WTC11 (cell line): ENCODE measurements at regions of chr7 and their contacts with region 1.

Region 1: GRCh38 chr7:65475734-65476319 is 102.2 kb downstream of the ZNF92 start:
- DNase-seq: no peak
- ATAC-seq: peak; percentile 36
- H3K4me3 Mint-ChIP-seq: no peak overlapping the region
- H3K27ac Mint-ChIP-seq: no peak overlapping the region
- H3K4me1 Mint-ChIP-seq: peaks cover 21% of the 10 kb centered on the region
- H3K27me3 Mint-ChIP-seq: peaks cover 12% of the 10 kb centered on the region
- CTCF ChIP-seq: no peak

Region 2: GRCh38 chr7:64951250-64951848 is 524.5 kb before region 1 on chr7:
- CTCF ChIA-PET with region 1: interaction called, 18 read pairs
- POLR2A ChIA-PET with region 1: no interaction called
- DNase-seq: no peak
- ATAC-seq: no peak; the same call in 1 of the 2 replicates
- H3K4me3 Mint-ChIP-seq: no peak overlapping the region
- H3K27ac Mint-ChIP-seq: no peak overlapping the region
- H3K4me1 Mint-ChIP-seq: no peaks in the 10 kb centered on the region
- H3K27me3 Mint-ChIP-seq: peaks cover 19% of the 10 kb centered on the region
- CTCF ChIP-seq: peak; percentile 23; the same call in 1 of the 2 replicates